PC-9 (cell line): ENCODE measurements at regions of chr10 and their contacts with region 1.

Region 1: DNA sequence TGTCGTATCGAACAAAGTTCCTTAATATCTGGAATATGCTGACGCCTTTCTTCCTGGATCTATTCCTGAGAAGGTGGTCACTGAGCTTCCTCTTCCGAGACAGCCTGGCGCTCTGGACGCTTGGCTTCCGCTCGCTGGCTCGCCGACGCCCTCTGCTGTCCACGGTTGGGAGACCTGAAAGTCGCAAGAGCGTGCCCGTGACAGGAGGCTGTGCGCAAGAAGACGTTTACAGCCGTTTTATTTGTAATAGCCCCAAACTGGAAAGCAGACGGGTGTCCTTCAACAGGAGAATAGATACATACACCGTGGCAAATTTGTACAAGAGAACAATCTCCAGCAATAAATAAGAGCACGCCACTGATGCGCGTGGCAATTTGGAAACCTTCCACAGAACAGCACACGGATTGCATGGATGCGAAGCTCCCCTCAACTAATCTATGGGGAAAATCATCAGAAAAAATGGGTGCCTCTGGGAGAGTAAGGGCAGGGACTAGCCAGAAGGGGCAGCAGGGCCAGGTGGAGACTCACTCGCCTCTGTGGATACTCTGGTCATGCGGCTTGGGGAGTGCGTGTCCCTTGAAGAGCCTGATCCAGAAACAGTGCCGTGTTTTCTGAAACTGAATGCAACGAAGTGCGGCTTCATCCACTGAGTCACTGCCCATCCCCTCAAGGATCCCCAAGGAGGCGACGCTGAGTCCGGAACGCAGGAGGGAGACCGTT is 41.5 kb upstream of the BNIP3 start:
- DNase-seq: peak in 1 of 2 experiments; percentile 63
- H3K4me3 ChIP-seq: no peak overlapping the region
- H3K27ac ChIP-seq: no peak overlapping the region
- H3K4me1 ChIP-seq: no peaks in the 10 kb centered on the region
- H3K27me3 ChIP-seq: 0 out of 2 replicates have a peak, but pooled peaks cover 13% of the 10 kb centered on the region
- CTCF ChIP-seq: peak; percentile 76

Region 2: GRCh38 chr10:131994435-131994834 is 28.8 kb before region 1 on chr10:
- CTCF ChIA-PET with region 1: no interaction called
- POLR2A ChIA-PET with region 1: no interaction called
- intact Hi-C with region 1: no loop called
- DNase-seq: no peak
- H3K4me3 ChIP-seq: no peak overlapping the region
- H3K27ac ChIP-seq: no peak overlapping the region
- H3K4me1 ChIP-seq: peaks cover 26% of the 10 kb centered on the region
- H3K27me3 ChIP-seq: no peaks in the 10 kb centered on the region
- CTCF ChIP-seq: no peak

Region 3: GRCh38 chr10:132011024-132011423 is 12.2 kb before region 1 on chr10:
- CTCF ChIA-PET with region 1: no interaction called
- POLR2A ChIA-PET with region 1: no interaction called
- intact Hi-C with region 1: no loop called
- DNase-seq: no peak
- H3K4me3 ChIP-seq: no peak overlapping the region
- H3K27ac ChIP-seq: no peak overlapping the region
- H3K4me1 ChIP-seq: no peaks in the 10 kb centered on the region
- H3K27me3 ChIP-seq: no peaks in the 10 kb centered on the region; the same call in 1 of the 2 replicates
- CTCF ChIP-seq: no peak

Region 4: DNA sequence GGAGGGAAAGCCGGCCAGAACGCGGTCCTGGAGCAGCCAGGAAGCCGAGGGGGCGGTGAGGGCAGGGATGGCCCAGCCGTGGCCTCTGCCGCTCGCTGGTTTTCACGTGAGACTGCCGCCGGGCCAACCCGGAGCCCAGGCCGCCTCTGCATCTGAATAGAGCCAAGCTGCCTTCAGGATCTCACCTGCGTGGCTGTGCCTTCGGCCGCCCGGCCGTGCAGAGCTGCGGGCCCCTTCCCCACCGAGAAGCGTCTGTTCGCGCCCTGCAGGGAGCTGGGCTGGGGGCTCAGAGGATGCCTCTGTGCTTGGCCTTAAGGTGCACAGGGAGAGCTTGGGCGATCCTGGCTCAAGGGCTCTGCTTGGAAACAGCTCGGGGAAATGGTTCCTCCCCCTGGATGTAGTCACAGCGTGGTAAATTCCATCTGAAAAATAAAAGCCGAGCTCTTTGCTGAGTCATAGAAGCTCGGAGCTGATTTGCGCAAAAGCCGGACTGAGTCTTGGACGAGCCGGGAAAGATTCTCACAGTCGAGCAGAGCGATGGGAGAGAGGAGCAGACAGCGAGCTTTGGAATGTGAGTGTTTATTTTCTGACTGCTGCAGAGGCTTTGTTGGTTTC is 42.3 kb after region 1 on chr10 and contains the start of gene JAKMIP3:
- CTCF ChIA-PET with region 1: no interaction called
- POLR2A ChIA-PET with region 1: no interaction called
- intact Hi-C with region 1: no loop called
- DNase-seq: peak; percentile 66 to 85
- H3K4me3 ChIP-seq: peak within 1 kb of the TSS; percentile 77
- H3K27ac ChIP-seq: peak within 1 kb of the TSS; percentile 77
- H3K4me1 ChIP-seq: peaks cover 21% of the 10 kb centered on the region; the same call in 1 of the 2 replicates
- H3K27me3 ChIP-seq: no peaks in the 10 kb centered on the region
- CTCF ChIP-seq: no peak
- total RNA-seq, gene JAKMIP3: 5.6 and 5.8 TPM in 2 replicates

Region 5: DNA sequence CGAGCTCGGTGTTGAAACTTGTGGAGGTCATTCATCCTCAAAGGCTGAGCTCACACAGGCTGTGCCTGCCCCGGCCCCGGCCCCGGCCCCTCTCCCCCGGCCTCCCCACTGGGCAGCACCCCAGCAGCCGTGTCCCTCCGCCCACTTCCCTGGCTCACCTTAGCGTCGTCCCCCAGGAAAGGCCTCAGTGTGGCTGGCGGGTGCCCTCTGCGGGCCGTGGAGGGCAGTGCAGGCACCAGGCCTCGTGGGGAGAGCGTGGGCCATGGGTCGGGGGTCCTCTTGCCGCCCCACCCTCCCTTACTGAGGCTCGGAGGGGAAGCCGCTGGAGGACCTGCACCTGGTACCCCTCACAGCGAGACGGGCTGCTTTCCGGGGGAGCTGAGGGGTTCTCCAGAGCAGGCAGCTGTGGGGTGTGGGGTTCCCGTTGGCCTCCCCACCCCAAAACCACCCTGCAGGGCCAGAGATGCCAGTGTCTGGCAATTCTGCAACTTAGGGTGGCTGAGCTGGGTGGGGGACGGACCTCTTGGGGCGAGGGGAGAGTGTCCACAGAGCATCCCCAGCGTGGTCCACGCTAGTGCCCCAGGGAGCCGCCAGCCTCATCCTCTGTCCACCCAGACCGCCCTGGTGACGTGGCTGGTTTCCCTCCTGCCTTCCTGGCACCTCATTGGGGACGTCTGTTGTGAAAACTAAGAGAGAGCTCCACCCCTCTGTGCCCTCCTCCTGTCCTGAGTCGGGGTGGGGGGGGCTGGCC is 119.3 kb after region 1 on chr10:
- CTCF ChIA-PET with region 1: no interaction called
- POLR2A ChIA-PET with region 1: no interaction called
- intact Hi-C with region 1: loop called (anchors 10 kb)
- DNase-seq: peak in 1 of 2 experiments; percentile 8
- H3K4me3 ChIP-seq: no peak overlapping the region
- H3K27ac ChIP-seq: no peak overlapping the region
- H3K4me1 ChIP-seq: no peaks in the 10 kb centered on the region
- H3K27me3 ChIP-seq: no peaks in the 10 kb centered on the region
- CTCF ChIP-seq: peak; percentile 83